Activated B cell treated with CpG ODN at 0.5 μM for 24 hours (primary cell): ENCODE measurements at regions of chr20 and their contacts with region 1.

Region 1: GRCh38 chr20:36460648-36461599 is 80.4 kb upstream of the MYL9 start:
- DNase-seq: peak; percentile 85
- ATAC-seq: peak; percentile 75
- H3K4me3 Mint-ChIP-seq: peak overlapping the region; percentile 74
- H3K27ac Mint-ChIP-seq: peak overlapping the region; percentile 91
- H3K4me1 Mint-ChIP-seq: peaks cover 46% of the 10 kb centered on the region
- H3K27me3 Mint-ChIP-seq: no peaks in the 10 kb centered on the region
- CTCF ChIP-seq: no peak

Region 2: GRCh38 chr20:34676642-34677373 is 1784.1 kb before region 1 on chr20 and contains the start of gene PIGU:
- CTCF ChIA-PET with region 1: no interaction called
- POLR2A ChIA-PET with region 1: no interaction called
- intact Hi-C with region 1: loop called (anchors 10 kb)
- DNase-seq: peak; percentile 91
- ATAC-seq: peak; percentile 94
- H3K4me3 Mint-ChIP-seq: peak within 1 kb of the TSS; percentile 98
- H3K27ac Mint-ChIP-seq: peak within 1 kb of the TSS; percentile 95
- H3K4me1 Mint-ChIP-seq: peaks cover 15% of the 10 kb centered on the region
- H3K27me3 Mint-ChIP-seq: no peaks in the 10 kb centered on the region
- CTCF ChIP-seq: no peak
- total RNA-seq, gene PIGU: 14.7 and 15.3 TPM in 2 replicates

Region 3: DNA sequence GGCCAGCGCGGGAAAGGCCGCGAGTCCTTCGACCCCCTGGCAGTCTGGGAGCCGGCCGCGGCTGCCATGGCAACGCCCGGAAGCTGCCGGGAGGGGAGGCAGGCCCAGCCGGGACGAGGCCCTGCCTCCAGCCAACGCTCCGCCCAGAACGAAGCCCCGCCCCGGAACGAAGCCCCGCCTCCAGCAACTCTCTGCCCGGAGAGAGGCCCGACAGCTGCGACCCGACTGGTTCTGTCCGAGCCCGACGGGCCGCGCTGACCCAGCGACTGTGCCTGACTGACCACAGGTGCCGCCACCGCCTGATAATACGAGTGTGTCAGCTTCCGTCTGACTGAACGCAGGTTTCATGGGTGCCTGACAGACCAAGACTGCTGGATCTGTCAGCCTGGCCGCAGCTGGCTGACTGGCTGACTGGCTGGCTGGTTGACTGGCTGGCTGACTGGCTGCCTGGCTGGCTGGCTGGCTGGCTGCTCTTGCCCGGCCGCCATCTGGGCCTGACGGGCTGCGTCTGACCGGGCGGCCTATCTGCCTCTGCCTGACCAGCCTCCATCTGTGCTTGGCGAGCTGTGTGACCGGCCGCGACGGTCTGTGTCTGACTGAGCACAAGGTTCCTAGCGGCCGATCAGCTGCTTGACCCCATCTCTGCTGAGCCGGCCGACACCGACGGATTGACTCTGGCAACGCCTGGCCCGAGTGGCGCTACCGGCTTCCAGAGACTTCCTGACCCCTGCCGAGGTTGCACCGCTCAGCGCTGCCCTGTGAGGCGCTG is 396.1 kb before region 1 on chr20:
- CTCF ChIA-PET with region 1: no interaction called
- POLR2A ChIA-PET with region 1: no interaction called
- intact Hi-C with region 1: loop called (anchors 10 kb)
- DNase-seq: peak; percentile 99
- ATAC-seq: peak; percentile 96
- H3K4me3 Mint-ChIP-seq: peak overlapping the region; percentile 90
- H3K27ac Mint-ChIP-seq: peak overlapping the region; percentile 78
- H3K4me1 Mint-ChIP-seq: peaks cover 5% of the 10 kb centered on the region
- H3K27me3 Mint-ChIP-seq: peaks cover 3% of the 10 kb centered on the region
- CTCF ChIP-seq: no peak

Region 4: GRCh38 chr20:36472637-36473081 is 11.7 kb after region 1 on chr20:
- CTCF ChIA-PET with region 1: no interaction called
- POLR2A ChIA-PET with region 1: interaction called, 11 read pairs
- intact Hi-C with region 1: loop called (anchors 1 kb)
- DNase-seq: no peak
- ATAC-seq: peak; percentile 60
- H3K4me3 Mint-ChIP-seq: peak overlapping the region; percentile 63
- H3K27ac Mint-ChIP-seq: peak overlapping the region; percentile 84
- H3K4me1 Mint-ChIP-seq: peaks cover 71% of the 10 kb centered on the region
- H3K27me3 Mint-ChIP-seq: no peaks in the 10 kb centered on the region
- CTCF ChIP-seq: no peak

Region 5: DNA sequence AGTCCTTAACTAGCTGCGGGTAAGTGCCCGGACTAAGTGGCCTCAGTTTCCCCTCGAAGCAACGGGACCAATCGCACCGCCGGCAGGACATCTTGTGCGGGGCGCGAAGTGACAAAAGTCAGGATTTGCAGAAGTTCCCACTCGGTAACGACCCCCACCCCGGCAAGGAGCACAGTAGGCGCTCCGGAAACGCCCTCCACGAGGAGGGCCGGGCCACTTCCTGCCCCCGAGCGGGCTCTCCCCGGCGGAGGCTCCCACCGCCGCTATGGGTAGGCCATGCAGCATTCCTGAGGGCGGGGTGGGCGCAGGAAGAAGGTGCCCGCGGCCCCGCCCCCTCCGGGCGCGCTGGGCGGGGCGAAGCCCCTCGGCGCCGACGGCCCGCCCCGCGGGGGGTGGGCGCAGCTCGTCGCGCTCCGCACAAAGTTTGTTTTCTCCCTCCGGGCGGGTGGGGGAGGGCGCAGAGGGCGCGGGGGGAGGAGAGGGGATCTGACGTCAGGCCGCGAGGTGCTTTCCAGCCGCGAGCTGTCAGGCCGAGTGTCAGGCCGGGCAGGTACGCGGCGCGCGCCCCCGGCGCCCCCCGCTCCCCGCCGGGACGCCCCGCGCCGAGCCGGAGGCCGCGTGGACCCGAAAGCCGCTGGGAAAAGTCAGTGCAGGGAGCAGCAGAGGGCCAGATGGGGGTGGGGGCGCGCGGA is 112.3 kb after region 1 on chr20 and contains the start of gene TGIF2:
- CTCF ChIA-PET with region 1: no interaction called
- POLR2A ChIA-PET with region 1: interaction called, 4 read pairs
- intact Hi-C with region 1: loop called (anchors 1 kb)
- DNase-seq: peak; percentile 92
- ATAC-seq: peak; percentile 77
- H3K4me3 Mint-ChIP-seq: peak within 1 kb of the TSS; percentile 90
- H3K27ac Mint-ChIP-seq: peak within 1 kb of the TSS; percentile 91
- H3K4me1 Mint-ChIP-seq: peaks cover 36% of the 10 kb centered on the region
- H3K27me3 Mint-ChIP-seq: no peaks in the 10 kb centered on the region
- CTCF ChIP-seq: no peak
- total RNA-seq, gene TGIF2: 40.8 and 43.8 TPM in 2 replicates

Region 6: GRCh38 chr20:36645998-36646397 is 185.1 kb after region 1 on chr20 and contains the start of gene SLA2:
- CTCF ChIA-PET with region 1: no interaction called
- POLR2A ChIA-PET with region 1: no interaction called
- intact Hi-C with region 1: no loop called
- DNase-seq: no peak
- ATAC-seq: peak; percentile 89
- H3K4me3 Mint-ChIP-seq: no peak within 1 kb of the TSS
- H3K27ac Mint-ChIP-seq: peak within 1 kb of the TSS; percentile 59
- H3K4me1 Mint-ChIP-seq: peaks cover 24% of the 10 kb centered on the region
- H3K27me3 Mint-ChIP-seq: no peaks in the 10 kb centered on the region
- CTCF ChIP-seq: no peak
- total RNA-seq, gene SLA2: 0.59 and 0.67 TPM in 2 replicates

Region 7: GRCh38 chr20:36745927-36746659 is 285.2 kb after region 1 on chr20 and contains the start of gene NDRG3:
- CTCF ChIA-PET with region 1: no interaction called
- POLR2A ChIA-PET with region 1: no interaction called
- intact Hi-C with region 1: loop called (anchors 2 kb)
- DNase-seq: peak; percentile 84
- ATAC-seq: peak; percentile 98
- H3K4me3 Mint-ChIP-seq: peak within 1 kb of the TSS; percentile 87
- H3K27ac Mint-ChIP-seq: peak within 1 kb of the TSS; percentile 88
- H3K4me1 Mint-ChIP-seq: peaks cover 16% of the 10 kb centered on the region
- H3K27me3 Mint-ChIP-seq: no peaks in the 10 kb centered on the region
- CTCF ChIP-seq: no peak
- total RNA-seq, gene NDRG3: 20.8 and 21.4 TPM in 2 replicates